ENCODE measurements at regions of chr12 and their contacts with region 1.

Region 1: DNA sequence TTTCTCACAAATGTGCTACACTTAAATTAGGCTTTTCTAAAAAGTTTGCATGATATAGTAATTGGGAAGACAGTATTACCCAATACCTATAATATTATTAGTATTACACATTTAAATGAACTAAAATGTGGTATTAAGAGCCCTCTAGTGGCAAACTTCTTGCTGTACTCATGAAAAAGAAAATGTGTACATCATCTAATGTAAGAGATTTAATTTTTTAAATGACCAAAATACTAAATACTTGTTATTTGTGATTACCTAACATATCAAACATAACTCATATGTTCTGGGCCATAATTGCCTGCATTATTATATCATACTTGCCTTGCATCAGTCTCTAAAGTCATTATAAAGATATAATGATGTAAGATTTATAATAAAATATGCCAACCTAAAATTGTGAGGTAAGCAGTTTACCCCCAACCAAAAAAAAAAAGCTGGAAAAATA is 64.2 kb downstream of the DNAI7 start:
- DNase-seq: peak; percentile 68
- H3K4me3 ChIP-seq: no peak overlapping the region
- H3K27ac ChIP-seq: no peak overlapping the region
- H3K4me1 ChIP-seq: no peaks in the 10 kb centered on the region
- H3K27me3 ChIP-seq: no peaks in the 10 kb centered on the region
- CTCF ChIP-seq: peak; percentile 75

Region 2: DNA sequence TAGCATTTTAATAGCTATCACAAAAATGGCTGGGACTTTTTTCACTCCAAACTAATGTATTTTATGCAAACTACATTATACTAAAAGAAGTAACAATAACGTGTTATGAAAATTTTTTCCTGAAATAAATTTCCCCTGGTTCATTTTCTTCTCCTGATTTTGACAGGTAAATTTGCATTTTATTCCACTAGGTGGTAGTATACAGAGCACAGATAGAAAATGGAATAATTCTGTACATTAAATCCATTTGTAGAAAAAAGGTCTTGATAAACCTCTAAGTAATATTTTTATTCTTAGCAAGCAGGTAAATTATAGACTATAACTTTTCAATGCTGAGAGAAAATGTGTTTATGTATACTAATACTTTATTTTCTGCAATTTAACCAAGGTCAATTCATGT is 278.3 kb before region 1 on chr12:
- CTCF ChIA-PET with region 1: no interaction called
- POLR2A ChIA-PET with region 1: no interaction called
- intact Hi-C with region 1: loop called (anchors 5 kb)
- DNase-seq: no peak
- H3K4me3 ChIP-seq: no peak overlapping the region
- H3K27ac ChIP-seq: no peak overlapping the region
- H3K4me1 ChIP-seq: peaks cover 39% of the 10 kb centered on the region
- H3K27me3 ChIP-seq: no peaks in the 10 kb centered on the region
- CTCF ChIP-seq: peak; percentile 60

Region 3: DNA sequence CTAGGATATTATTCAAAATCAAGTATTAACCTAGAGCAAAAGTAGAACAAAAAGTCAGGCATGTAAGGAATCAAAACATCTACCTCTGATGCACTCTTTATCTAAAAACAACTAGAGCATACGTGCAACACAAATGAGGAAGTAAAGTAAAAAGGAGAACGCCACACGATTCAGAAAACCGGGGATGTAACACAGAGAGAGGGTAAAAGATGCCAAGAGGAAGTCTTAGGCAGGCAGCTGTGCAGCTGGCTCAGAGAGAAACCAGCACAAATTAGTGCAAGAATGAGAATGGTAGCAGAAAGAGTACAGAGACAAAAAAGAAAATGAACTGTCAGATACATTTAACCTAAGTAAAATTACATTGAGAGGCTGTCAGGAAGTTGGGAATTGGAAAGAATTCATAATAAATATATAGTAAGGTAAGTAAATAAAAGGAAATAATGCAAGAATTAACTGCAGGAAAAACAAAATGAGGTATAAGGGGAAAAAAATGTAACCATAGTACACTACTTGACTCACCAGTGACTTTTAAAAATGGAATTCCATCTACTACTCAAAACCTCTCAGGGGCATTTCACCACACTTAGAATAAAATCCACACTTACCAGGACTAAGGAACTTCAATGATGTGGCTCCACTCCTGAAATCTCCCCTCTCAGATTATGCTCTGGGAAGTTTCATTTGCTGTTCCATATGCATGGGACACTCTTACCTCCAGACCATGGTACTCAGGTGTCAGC is 198.9 kb before region 1 on chr12:
- CTCF ChIA-PET with region 1: no interaction called
- POLR2A ChIA-PET with region 1: no interaction called
- intact Hi-C with region 1: no loop called
- DNase-seq: no peak
- H3K4me3 ChIP-seq: no peak overlapping the region
- H3K27ac ChIP-seq: peak overlapping the region; percentile 11
- H3K4me1 ChIP-seq: peaks cover 17% of the 10 kb centered on the region
- H3K27me3 ChIP-seq: no peaks in the 10 kb centered on the region
- CTCF ChIP-seq: no peak

Region 4: DNA sequence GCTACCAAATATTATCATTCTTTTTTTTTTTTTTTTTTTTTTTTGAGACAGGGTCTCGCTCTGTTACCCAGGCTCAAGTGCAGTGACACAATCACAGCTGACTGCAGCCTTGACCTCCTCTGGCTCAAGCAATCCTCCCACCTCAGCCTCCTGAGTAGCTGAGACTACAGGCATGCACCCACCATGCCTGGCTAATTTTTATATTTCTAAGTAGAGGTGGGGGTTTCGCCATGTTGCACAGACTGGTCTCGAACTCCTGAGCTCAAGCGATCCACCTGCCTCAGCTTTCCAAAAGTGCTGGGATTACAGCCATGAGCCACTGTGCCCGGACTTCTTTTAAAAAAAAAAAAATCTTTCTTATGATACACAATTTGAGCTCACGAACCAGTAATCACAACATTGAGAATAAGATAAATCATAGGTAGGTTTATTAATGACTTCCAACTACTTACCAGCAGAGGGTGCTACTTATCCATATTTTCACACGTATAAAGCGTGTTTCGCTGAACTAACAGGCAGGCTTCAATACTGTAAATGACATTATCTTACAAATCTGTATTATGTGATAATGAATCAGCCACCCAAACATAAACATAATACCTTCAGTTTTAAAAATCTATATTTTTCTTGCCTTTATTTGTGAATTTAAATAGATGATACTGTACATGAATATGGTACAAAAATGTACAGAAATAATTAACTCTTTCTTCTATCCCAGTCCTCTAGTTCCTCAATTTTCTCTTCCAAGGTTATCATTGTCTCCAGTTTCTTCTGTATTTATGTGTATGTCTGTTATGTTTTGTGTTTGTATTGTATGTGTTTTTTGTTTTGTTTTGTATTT is 139.3 kb before region 1 on chr12:
- CTCF ChIA-PET with region 1: interaction called, 3 read pairs
- POLR2A ChIA-PET with region 1: no interaction called
- intact Hi-C with region 1: loop called (anchors 2 kb)
- DNase-seq: peak; percentile 72
- H3K4me3 ChIP-seq: no peak overlapping the region
- H3K27ac ChIP-seq: no peak overlapping the region
- H3K4me1 ChIP-seq: no peaks in the 10 kb centered on the region
- H3K27me3 ChIP-seq: peaks cover 9% of the 10 kb centered on the region
- CTCF ChIP-seq: peak; percentile 72